ENCODE measurements at regions of chr3 and their contacts with region 1.

Region 1: GRCh38 chr3:48439820-48440589 is at the starts of genes CCDC51 and TMA7:
- DNase-seq: peak; percentile 99
- ATAC-seq: peak; percentile 95
- H3K4me3 Mint-ChIP-seq: peak within 1 kb of the TSS; percentile 99
- H3K27ac Mint-ChIP-seq: peak within 1 kb of the TSS; percentile 99
- H3K4me1 Mint-ChIP-seq: peaks cover 17% of the 10 kb centered on the region
- H3K27me3 Mint-ChIP-seq: no peaks in the 10 kb centered on the region
- CTCF ChIP-seq: no peak
- total RNA-seq, gene CCDC51: 23.9 to 25.1 TPM (median 24.7 TPM) in 3 replicates
- total RNA-seq, gene TMA7: 281 to 318 TPM (median 285 TPM) in 3 replicates

Region 2: GRCh38 chr3:48119505-48120193 is 320.4 kb before region 1 on chr3:
- CTCF ChIA-PET with region 1: no interaction called
- POLR2A ChIA-PET with region 1: no interaction called
- DNase-seq: no peak
- ATAC-seq: no peak
- H3K4me3 Mint-ChIP-seq: no peak overlapping the region
- H3K27ac Mint-ChIP-seq: no peak overlapping the region
- H3K4me1 Mint-ChIP-seq: peaks cover 21% of the 10 kb centered on the region
- H3K27me3 Mint-ChIP-seq: no peaks in the 10 kb centered on the region
- CTCF ChIP-seq: no peak

Region 3: GRCh38 chr3:48188266-48189201 is 251.5 kb before region 1 on chr3 and contains the start of gene CDC25A:
- CTCF ChIA-PET with region 1: interaction called, 149 read pairs
- POLR2A ChIA-PET with region 1: no interaction called
- DNase-seq: peak; percentile 98
- ATAC-seq: peak; percentile 96
- H3K4me3 Mint-ChIP-seq: peak within 1 kb of the TSS; percentile 96
- H3K27ac Mint-ChIP-seq: peak within 1 kb of the TSS; percentile 63
- H3K4me1 Mint-ChIP-seq: peaks cover 38% of the 10 kb centered on the region
- H3K27me3 Mint-ChIP-seq: no peaks in the 10 kb centered on the region
- CTCF ChIP-seq: no peak
- total RNA-seq, gene CDC25A: 52.4 to 57.6 TPM (median 54.7 TPM) in 3 replicates

Region 4: GRCh38 chr3:48256557-48256956 is 183.4 kb before region 1 on chr3:
- CTCF ChIA-PET with region 1: interaction called, 18 read pairs
- POLR2A ChIA-PET with region 1: no interaction called
- DNase-seq: no peak
- ATAC-seq: no peak
- H3K4me3 Mint-ChIP-seq: no peak overlapping the region
- H3K27ac Mint-ChIP-seq: peak overlapping the region; percentile 45; the same call in 1 of the 2 replicates
- H3K4me1 Mint-ChIP-seq: no peaks in the 10 kb centered on the region
- H3K27me3 Mint-ChIP-seq: no peaks in the 10 kb centered on the region
- CTCF ChIP-seq: no peak

Region 5: DNA sequence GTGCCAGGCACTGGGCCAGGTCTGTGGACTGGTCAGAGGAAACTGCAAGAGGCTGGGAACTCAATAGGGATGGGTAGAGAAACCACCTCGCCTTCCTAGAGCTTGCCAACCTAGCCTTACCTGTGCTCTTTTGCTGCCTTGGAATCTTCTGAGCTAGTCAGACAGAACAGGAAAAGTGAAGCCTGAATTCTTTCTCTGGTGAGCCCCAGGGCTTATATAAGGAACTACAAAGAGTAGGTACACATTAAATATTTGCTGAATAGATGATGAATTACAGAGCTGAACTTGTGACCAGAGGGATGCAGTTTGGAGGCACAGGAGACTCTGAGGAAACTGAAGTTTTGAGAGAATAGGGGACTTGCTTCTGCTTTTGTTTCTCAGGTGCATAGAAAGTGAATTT is 83.6 kb before region 1 on chr3:
- CTCF ChIA-PET with region 1: interaction called, 15 read pairs
- POLR2A ChIA-PET with region 1: no interaction called
- DNase-seq: no peak
- ATAC-seq: no peak
- H3K4me3 Mint-ChIP-seq: no peak overlapping the region
- H3K27ac Mint-ChIP-seq: no peak overlapping the region
- H3K4me1 Mint-ChIP-seq: no peaks in the 10 kb centered on the region
- H3K27me3 Mint-ChIP-seq: peaks cover 57% of the 10 kb centered on the region
- CTCF ChIP-seq: no peak

Region 6: DNA sequence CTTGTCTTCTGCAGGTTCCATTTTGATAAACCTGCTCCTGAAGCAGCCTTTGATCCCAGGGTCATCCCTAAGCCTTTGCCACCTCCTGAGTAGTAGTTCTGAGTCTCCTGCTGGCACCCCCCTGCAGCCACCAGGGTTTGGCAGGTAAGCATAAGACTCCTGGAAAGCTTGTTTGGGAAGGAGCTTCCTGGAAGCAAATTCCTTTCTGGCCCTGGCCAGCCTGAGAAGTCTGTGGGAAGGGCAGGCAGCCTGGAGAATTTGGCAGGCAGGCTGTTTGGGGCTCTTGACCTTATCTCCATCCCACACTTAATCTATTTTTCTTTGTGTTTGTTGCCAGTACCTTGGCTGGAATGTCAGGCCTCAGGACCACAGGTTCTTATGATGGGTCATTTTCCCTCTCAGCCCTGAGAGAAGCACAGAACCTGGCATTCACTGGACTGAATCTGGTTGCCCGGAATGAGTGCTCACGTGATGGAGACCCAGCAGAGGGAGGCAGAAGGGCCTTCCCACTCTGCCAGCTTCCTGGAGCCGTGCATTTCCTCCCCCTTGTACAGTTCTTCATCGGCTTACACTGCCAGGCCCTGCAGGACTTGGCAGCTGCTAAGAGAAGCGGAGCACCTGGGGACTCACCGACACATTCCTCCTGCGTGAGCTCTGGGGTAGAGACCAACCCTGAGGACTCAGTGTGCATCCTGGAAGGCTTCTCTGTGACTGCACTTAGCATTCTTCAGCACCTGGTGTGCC is 19.9 kb after region 1 on chr3:
- CTCF ChIA-PET with region 1: interaction called, 14 read pairs
- POLR2A ChIA-PET with region 1: interaction called, 5 read pairs
- DNase-seq: no peak
- ATAC-seq: no peak
- H3K4me3 Mint-ChIP-seq: no peak overlapping the region
- H3K27ac Mint-ChIP-seq: no peak overlapping the region
- H3K4me1 Mint-ChIP-seq: no peaks in the 10 kb centered on the region; the same call in 1 of the 2 replicates
- H3K27me3 Mint-ChIP-seq: no peaks in the 10 kb centered on the region
- CTCF ChIP-seq: no peak

Region 7: DNA sequence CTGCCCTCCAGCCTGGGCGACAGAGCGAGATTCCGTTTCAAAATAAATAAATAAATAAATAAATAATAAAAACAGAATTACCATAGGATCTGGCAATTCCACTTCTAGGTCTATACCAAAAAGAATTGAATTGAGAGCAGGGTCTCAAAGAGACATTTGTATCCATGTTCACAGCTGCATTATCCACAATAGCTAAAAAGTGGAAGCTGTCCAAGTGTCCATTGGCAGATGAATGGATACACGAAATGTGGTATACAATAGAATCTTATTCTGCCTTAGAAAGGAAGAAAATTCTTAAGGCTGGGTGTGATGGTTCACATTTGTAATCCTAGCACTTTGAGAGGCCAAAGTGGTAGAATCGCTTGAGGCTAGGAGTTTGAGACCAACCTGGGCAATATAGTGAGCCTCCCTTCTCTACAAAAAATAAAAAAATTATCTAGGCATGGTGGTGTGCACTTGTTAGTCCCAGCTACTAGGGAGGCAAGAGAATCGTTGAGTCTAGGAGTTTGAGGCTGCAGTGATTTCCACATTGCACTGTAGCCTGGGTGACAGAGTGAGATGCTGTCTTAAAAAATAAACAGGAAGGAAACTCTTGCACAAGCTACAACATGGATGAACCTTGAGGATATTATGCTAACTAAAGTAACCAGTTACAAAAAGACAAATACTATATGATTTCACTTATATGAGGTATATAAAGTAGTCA is 92.4 kb after region 1 on chr3:
- CTCF ChIA-PET with region 1: interaction called, 18 read pairs
- POLR2A ChIA-PET with region 1: no interaction called
- DNase-seq: no peak
- ATAC-seq: no peak
- H3K4me3 Mint-ChIP-seq: no peak overlapping the region
- H3K27ac Mint-ChIP-seq: no peak overlapping the region
- H3K4me1 Mint-ChIP-seq: no peaks in the 10 kb centered on the region
- H3K27me3 Mint-ChIP-seq: no peaks in the 10 kb centered on the region
- CTCF ChIP-seq: no peak

Region 8: GRCh38 chr3:48635222-48636021 is 195.4 kb after region 1 on chr3 and contains the start of gene SLC26A6:
- CTCF ChIA-PET with region 1: interaction called, 19 read pairs
- POLR2A ChIA-PET with region 1: no interaction called
- DNase-seq: peak; percentile 99
- ATAC-seq: peak; percentile 91
- H3K4me3 Mint-ChIP-seq: peak within 1 kb of the TSS; percentile 84
- H3K27ac Mint-ChIP-seq: peak within 1 kb of the TSS; percentile 94
- H3K4me1 Mint-ChIP-seq: peaks cover 32% of the 10 kb centered on the region
- H3K27me3 Mint-ChIP-seq: no peaks in the 10 kb centered on the region
- CTCF ChIP-seq: peak; percentile 62
- total RNA-seq, gene SLC26A6: 57.2 to 58.9 TPM (median 57.8 TPM) in 3 replicates

Measured in WTC11 (cell line).